ENCODE measurements at regions of chr11 and their contacts with region 1.

Region 1: DNA sequence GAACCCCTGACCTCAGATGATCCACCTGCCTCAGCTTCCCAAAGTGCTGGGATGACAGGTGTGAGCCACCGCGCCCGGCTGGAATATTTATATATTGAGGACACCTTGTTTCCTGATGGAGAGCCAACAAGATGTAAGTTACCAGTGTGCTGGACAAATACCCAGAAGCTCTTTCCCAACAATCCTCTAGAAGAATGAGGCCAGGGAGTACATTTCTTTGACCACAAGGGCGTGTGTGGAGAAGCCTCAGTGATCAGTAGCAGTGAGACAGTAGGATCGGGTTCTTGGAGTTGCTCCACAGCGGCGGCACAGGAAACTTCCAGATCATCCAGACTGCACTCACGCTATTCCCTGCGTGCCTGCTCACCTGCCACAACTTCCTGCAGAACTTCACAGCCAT is 10.3 kb upstream of the POLA2 start:
- DNase-seq: no peak
- ATAC-seq: 0 out of 6 replicates have a peak, but pooled peaks of 1 of the 2 experiments have one; percentile 5
- H3K4me3 ChIP-seq: no peak overlapping the region
- H3K27ac ChIP-seq: no peak overlapping the region
- H3K4me1 ChIP-seq: no peaks in the 10 kb centered on the region
- CTCF ChIP-seq: no peak
- EP300 ChIP-seq: no peak
- POLR2A ChIP-seq: no peak
- RAD21 ChIP-seq: no peak

Region 2: GRCh38 chr11:64729851-64730382 is 521.6 kb before region 1 on chr11:
- CTCF ChIA-PET with region 1: no interaction called
- POLR2A ChIA-PET with region 1: no interaction called
- DNase-seq: no peak
- ATAC-seq: peak; percentile 63 to 82; a peak in 5 of 6 replicates
- H3K4me3 ChIP-seq: no peak overlapping the region
- H3K27ac ChIP-seq: no peak overlapping the region
- H3K4me1 ChIP-seq: peaks cover 5% of the 10 kb centered on the region; the same call in 2 of the 3 replicates
- CTCF ChIP-seq: no peak
- EP300 ChIP-seq: no peak
- POLR2A ChIP-seq: no peak
- RAD21 ChIP-seq: no peak

Region 3: DNA sequence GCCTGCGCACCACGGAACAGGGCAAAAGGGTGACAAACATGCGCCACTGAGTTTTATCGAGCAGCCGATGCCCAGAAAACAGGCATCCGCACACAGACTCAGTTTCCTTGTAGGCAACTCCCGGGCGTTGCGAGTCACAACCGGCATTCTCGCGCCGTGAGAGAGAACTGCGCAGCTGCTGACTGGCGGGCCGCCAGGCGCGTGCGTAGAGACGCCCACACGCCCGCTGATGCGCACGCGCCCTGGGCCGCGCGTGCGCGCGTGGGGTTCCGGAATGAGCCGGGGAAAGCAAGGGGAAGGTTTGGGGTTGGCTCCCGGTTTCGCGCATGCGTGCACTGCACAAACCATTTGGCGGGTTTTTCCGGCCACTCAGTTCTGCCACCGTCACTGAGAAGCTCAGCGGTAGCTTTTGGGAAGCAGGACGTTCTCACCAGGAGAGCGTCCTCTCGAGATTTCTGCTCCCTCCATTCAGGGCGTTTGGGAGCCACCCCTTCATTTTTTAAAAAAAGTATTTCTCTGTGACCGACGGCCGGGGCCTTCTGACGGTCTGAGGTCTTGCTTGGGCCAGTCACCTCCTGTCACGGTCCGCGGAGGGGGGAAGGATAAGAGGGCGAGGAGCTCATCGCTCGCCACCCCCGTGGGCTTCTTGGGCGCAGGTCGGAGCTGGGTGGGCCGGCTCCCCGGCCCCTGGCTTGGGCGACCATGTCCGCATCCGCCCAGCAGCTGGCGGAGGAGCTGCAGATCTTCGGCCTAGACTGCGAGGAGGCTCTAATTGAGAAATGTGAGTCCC is 10.3 kb after region 1 on chr11 and contains the start of gene POLA2:
- CTCF ChIA-PET with region 1: interaction called, 14 read pairs
- POLR2A ChIA-PET with region 1: no interaction called
- DNase-seq: peak; percentile 95 to 96
- ATAC-seq: peak; percentile 79 to 94
- H3K4me3 ChIP-seq: peak within 1 kb of the TSS; percentile 77
- H3K27ac ChIP-seq: peak within 1 kb of the TSS; percentile 82 to 93
- H3K4me1 ChIP-seq: peaks cover 11% of the 10 kb centered on the region
- CTCF ChIP-seq: no peak
- EP300 ChIP-seq: no peak
- POLR2A ChIP-seq: peak; percentile 85
- RAD21 ChIP-seq: no peak
- polyA plus RNA-seq, gene POLA2: 52.3 and 55.6 TPM in 2 replicates